Aorta (tissue), 5 donors: ENCODE measurements at regions of chr4 and their contacts with region 1.

Region 1: DNA sequence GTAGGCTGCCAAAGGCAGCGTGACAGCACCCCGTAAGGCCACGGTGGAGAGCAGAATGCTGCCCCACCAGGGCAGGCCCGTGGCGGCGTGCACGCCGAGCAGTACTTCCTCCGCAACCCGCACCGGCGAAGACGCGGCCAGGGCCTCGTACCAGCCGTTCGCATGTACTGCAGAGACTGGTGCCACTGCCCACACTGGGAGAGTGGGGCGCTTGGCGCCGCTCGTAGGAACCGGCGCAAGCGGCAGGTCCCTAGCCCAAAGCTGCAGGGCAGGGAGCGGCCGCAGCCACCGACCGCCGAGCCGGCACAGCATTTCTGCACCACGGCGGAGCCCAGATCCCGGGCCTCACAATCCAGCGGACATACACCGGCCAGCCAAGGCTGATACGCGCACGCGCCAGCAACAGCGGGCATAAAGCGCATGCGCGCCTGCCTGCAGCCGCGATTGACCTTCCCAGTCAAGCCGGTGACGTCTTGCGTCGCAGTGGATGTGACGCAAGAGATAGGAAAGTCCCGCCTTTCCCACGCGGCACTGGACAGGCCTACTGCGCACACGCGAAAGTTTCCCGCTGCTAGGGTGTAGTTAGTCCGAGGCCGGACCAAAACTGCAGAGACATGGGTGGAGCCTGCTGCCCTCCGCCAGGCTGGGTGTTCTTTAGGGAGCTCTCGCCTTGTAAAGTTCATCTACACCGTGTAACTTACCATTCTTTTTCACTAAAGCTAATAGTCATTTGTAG is at the start of gene COX18:
- DNase-seq: peak; percentile 99
- ATAC-seq: peak; percentile 99
- H3K4me3 ChIP-seq: peak within 1 kb of the TSS; percentile 68 to 90
- H3K27ac ChIP-seq: peak within 1 kb of the TSS; percentile 72 to 79
- H3K4me1 ChIP-seq: peaks cover 0 to 2% of the 10 kb centered on the region in 2 donors
- H3K27me3 ChIP-seq: no peaks in the 10 kb centered on the region
- total RNA-seq, gene COX18: 8.6 to 12.5 TPM

Region 2: GRCh38 chr4:72974694-72975487 is 94.6 kb before region 1 on chr4:
- intact Hi-C with region 1: no loop called
- DNase-seq: no peak
- ATAC-seq: no peak
- H3K4me3 ChIP-seq: no peak overlapping the region
- H3K27ac ChIP-seq: peak overlapping the region; percentile 76 to 77
- H3K4me1 ChIP-seq: peaks cover 6 to 8% of the 10 kb centered on the region in 2 donors
- H3K27me3 ChIP-seq: no peaks in the 10 kb centered on the region

Region 3: DNA sequence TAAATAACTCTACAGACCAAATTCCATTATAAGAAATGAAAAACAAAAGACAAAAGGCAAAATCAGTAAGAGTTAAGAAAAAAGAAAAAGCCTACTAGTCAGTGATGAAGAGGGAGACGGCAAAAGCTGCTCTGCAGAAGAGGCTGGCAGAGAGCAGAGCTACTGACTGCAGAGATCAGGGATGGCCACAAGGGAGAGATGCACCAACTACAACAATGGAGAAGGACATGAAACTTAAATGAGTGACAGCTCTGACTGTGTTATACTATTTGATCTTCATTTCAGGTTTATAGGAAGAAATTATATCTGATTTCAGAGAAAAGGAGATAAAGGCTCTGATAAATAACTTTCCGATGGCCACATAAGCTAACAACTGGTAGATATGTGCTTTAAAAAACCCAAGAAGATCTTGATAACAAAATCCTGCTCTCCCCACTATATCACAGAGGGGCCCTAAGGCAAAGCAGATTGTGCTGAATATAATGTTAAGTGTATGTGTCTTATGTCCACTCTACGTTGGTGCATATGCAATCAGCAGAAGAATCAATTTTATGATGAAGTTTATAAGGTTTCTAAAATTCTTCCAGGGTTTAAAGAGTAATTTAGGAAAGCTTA is 58.4 kb after region 1 on chr4:
- intact Hi-C with region 1: loop called in 1 of 2 experiments (anchors 10 kb)
- DNase-seq: no peak
- ATAC-seq: no peak
- H3K4me3 ChIP-seq: no peak overlapping the region
- H3K27ac ChIP-seq: no peak overlapping the region
- H3K4me1 ChIP-seq: no peaks in the 10 kb centered on the region
- H3K27me3 ChIP-seq: no peaks in the 10 kb centered on the region